RWPE1 (cell line): ENCODE measurements at regions of chrX and their contacts with region 1.

Region 1: DNA sequence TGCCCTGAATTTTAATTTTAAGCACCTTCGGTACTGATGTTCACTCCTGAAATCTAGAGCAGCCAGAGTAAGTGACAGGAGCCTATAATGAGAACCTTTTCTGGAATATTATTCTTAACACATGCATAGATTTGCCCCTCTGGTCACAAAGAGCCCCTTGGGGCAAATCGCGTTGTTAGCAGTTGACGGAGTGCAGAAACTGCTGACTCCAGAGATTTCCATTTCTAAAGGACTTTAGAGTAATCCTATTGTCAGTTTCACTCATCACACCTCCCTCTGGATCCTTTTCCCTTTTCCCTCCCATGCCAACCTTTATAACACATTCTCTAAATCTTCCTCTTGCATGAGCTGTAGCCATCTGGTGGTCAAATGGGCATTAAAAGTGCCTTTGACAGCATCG is 264.9 kb upstream of the PRPS2 start:
- DNase-seq: no peak
- H3K27ac ChIP-seq: no peak overlapping the region
- CTCF ChIP-seq: no peak

Region 2: DNA sequence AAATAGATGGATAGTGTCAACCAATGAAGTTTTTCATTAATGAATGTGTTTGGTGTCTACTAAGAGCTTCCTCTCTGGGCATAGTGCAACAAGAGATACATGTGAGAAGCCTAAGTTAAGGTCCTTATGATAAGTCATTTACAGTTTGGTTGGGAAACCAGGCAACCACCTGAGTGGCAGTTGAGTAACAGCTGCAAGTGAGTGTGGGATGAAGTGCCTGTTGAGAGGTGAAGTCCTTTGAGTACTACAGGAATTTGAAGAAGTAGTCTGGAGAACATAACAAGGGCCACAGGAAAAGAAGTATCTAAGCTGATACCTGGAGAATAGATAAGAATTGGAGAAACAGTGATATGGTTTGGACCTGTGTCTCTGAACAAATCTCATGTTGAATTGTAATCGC is 436.6 kb before region 1 on chrX:
- CTCF ChIA-PET with region 1: no interaction called
- POLR2A ChIA-PET with region 1: interaction called, 14 read pairs
- DNase-seq: no peak
- H3K27ac ChIP-seq: no peak overlapping the region
- CTCF ChIP-seq: no peak